ENCODE measurements at regions of chr17 and their contacts with region 1.

Region 1: GRCh38 chr17:49779739-49780231 is 8.7 kb upstream of the KAT7 start:
- DNase-seq: peak; percentile 79
- H3K4me3 ChIP-seq: no peak overlapping the region
- H3K27ac ChIP-seq: no peak overlapping the region
- H3K4me1 ChIP-seq: peaks cover 26% of the 10 kb centered on the region
- H3K27me3 ChIP-seq: no peaks in the 10 kb centered on the region
- CTCF ChIP-seq: peak; percentile 48 to 67
- POLR2A ChIP-seq: no peak

Region 2: GRCh38 chr17:49763735-49764558 is 15.8 kb before region 1 on chr17 and contains the start of gene FAM117A:
- CTCF ChIA-PET with region 1: interaction called, 22 read pairs
- POLR2A ChIA-PET with region 1: interaction called, 39 read pairs
- dilution Hi-C with region 1: no loop called
- intact Hi-C with region 1: loop called (anchors 1 kb)
- DNase-seq: peak; percentile 99
- H3K4me3 ChIP-seq: peak within 1 kb of the TSS; percentile 63 to 86 (median 67)
- H3K27ac ChIP-seq: no peak within 1 kb of the TSS
- H3K4me1 ChIP-seq: peaks cover 14% of the 10 kb centered on the region
- H3K27me3 ChIP-seq: peaks cover 15 to 42% of the 10 kb centered on the region in 2 experiments
- CTCF ChIP-seq: no peak
- POLR2A ChIP-seq: peak; percentile 54
- total RNA-seq, gene FAM117A: 10.4 and 12.2 TPM in 2 replicates

Region 3: DNA sequence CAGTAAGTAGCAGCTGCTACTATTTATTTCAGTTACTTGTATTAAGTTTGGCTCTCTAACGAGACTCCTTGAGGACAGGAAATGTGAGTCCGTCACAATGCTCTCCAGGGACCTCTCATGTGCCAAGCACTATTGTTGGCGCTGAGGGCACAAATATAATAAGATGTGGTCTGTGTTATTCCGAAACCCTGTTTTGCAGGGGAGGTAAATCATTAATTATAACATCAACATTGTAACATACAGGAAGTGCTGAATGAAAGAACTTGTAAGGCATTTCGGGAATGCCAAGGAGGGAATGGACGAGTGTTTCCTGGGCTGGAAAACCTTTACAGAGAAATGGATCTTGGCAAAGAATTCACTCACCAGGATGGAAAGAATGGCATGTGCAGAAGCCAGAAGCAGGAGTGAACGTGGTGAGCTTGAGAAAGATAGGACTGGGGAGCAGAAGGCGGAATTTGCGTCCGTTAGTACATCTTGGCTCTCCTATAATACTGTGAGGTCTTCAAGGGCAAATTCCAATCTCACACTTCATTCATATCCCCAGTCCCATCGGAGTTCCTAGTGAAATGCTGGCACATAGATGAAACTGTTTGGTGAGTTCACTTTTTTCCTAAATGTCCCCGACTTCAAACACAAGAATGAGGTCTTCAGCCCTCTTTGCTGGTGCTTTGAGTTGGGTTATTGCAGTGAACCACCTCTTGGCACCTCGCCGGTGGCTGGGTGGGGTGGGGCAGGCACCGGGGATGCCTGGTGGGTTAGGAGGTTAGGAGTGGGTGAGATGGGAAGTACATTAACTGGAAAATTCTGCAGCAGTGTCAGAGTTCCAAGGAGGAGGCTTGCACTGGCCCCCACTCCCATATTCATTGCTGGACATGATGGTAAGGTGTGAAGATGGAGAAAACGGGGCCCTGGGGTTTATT is 56.6 kb after region 1 on chr17:
- CTCF ChIA-PET with region 1: no interaction called
- POLR2A ChIA-PET with region 1: no interaction called
- dilution Hi-C with region 1: no loop called
- intact Hi-C with region 1: loop called (anchors 1 kb)
- DNase-seq: peak; percentile 94
- H3K4me3 ChIP-seq: peak overlapping the region in 1 of 3 experiments; percentile 21
- H3K27ac ChIP-seq: peak overlapping the region; percentile 77
- H3K4me1 ChIP-seq: peaks cover 66% of the 10 kb centered on the region
- H3K27me3 ChIP-seq: no peaks in the 10 kb centered on the region
- CTCF ChIP-seq: no peak
- POLR2A ChIP-seq: peak; percentile 63

Region 4: DNA sequence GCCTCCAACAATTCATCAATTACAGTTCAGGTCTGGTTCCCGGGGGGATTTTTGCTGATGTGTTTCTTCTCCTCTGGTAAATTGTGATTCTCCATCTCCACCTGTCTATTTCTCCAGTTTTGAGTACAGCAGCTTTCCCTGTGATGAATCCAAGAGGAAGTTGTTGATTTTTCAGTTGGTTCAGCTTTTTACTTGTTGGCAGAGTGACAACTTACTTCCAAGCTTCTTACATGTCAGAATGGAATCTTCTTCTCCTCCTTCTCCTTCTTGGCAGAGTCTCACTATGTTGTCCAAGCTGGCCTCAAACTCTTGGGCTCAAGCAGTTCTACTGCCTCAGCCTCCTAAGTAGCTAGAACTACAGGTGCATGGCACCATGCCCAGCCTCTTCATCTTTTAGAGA is 461.1 kb after region 1 on chr17:
- CTCF ChIA-PET with region 1: no interaction called
- POLR2A ChIA-PET with region 1: no interaction called
- dilution Hi-C with region 1: no loop called
- intact Hi-C with region 1: no loop called
- DNase-seq: no peak
- H3K4me3 ChIP-seq: no peak overlapping the region
- H3K27ac ChIP-seq: no peak overlapping the region
- H3K4me1 ChIP-seq: no peaks in the 10 kb centered on the region
- H3K27me3 ChIP-seq: peaks cover 17 to 26% of the 10 kb centered on the region in 2 experiments
- CTCF ChIP-seq: no peak
- POLR2A ChIP-seq: no peak

Measured in endothelial cell of umbilical vein (primary cell).